AG04450 (cell line): ENCODE measurements at regions of chr2 and their contacts with region 1.

Region 1: DNA sequence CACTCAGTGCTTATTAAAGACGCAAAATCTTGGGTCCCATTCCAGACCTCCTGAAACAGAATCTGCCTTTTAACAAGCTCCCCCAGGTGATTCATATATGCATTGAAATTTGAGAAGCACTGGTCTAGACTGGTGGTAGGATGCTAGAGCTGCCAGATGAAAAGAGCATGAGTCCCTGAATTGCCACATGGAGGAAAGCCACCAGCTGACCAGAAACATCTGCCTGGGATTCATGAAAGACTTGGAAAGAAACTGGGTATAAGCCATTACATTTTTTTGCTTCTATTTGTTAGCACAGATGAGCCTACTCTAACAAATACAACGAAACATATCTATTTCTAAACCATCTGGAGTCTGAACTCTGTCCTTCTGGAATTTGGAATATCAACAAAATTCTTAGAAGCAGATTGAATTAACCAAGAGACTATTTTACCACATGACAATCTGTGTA is 228.9 kb downstream of the RBM43 start:
- DNase-seq: peak; percentile 99
- H3K4me3 ChIP-seq: no peak overlapping the region
- H3K27ac ChIP-seq: no peak overlapping the region
- H3K27me3 ChIP-seq: no peaks in the 10 kb centered on the region
- CTCF ChIP-seq: no peak; the same call in 1 of the 2 replicates

Region 2: GRCh38 chr2:150876251-150876980 is 156.3 kb before region 1 on chr2:
- CTCF ChIA-PET with region 1: no interaction called
- POLR2A ChIA-PET with region 1: interaction called, 12 read pairs
- DNase-seq: peak; percentile 57
- H3K4me3 ChIP-seq: no peak overlapping the region
- H3K27ac ChIP-seq: no peak overlapping the region
- H3K27me3 ChIP-seq: no peaks in the 10 kb centered on the region
- CTCF ChIP-seq: no peak

Region 3: DNA sequence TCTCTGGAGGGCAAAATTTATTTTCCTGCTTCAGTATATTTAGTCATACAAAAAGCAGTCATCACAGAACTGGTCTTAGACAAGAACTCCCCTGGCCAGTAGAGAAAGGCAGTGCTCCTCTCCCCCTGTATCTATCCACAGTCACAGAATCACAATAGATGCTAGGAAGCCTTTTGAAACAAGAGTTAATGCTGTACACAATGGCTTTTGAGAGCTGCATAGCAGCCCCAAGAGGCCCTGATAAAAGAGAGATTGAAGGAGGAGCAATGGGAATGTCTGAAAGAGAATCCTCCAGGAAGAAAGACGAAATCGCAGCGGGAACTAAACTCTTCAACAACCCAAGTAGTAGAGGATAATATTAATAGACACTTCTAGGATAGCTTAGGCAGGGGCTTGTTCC is 101.3 kb before region 1 on chr2:
- CTCF ChIA-PET with region 1: no interaction called
- POLR2A ChIA-PET with region 1: no interaction called
- DNase-seq: no peak
- H3K4me3 ChIP-seq: no peak overlapping the region
- H3K27ac ChIP-seq: no peak overlapping the region
- H3K27me3 ChIP-seq: no peaks in the 10 kb centered on the region
- CTCF ChIP-seq: no peak

Region 4: GRCh38 chr2:151051574-151052220 is 18.9 kb after region 1 on chr2:
- CTCF ChIA-PET with region 1: interaction called, 10 read pairs
- POLR2A ChIA-PET with region 1: no interaction called
- DNase-seq: no peak
- H3K4me3 ChIP-seq: no peak overlapping the region
- H3K27ac ChIP-seq: no peak overlapping the region
- H3K27me3 ChIP-seq: no peaks in the 10 kb centered on the region
- CTCF ChIP-seq: peak; percentile 77